Breast epithelium (tissue), 4 donors: ENCODE measurements at regions of chr9 and their contacts with region 1.

Region 1: GRCh38 chr9:81103597-81104471 is 585.5 kb downstream of the TLE1 start:
- DNase-seq: no peak
- H3K4me3 ChIP-seq: no peak overlapping the region
- H3K27ac ChIP-seq: no peak overlapping the region
- H3K4me1 ChIP-seq: no peaks in the 10 kb centered on the region
- H3K27me3 ChIP-seq: no peaks in the 10 kb centered on the region
- CTCF ChIP-seq: no peak
- POLR2A ChIP-seq: no peak

Region 2: GRCh38 chr9:79312686-79313421 is 1791.0 kb before region 1 on chr9:
- intact Hi-C with region 1: no loop called
- DNase-seq: no peak
- H3K4me3 ChIP-seq: no peak overlapping the region
- H3K27ac ChIP-seq: no peak overlapping the region
- H3K4me1 ChIP-seq: no peaks in the 10 kb centered on the region
- H3K27me3 ChIP-seq: no peaks in the 10 kb centered on the region
- CTCF ChIP-seq: no peak
- POLR2A ChIP-seq: no peak

Region 3: GRCh38 chr9:79447762-79448161 is 1656.1 kb before region 1 on chr9:
- intact Hi-C with region 1: no loop called
- DNase-seq: no peak
- H3K4me3 ChIP-seq: no peak overlapping the region
- H3K27ac ChIP-seq: no peak overlapping the region
- H3K4me1 ChIP-seq: no peaks in the 10 kb centered on the region
- H3K27me3 ChIP-seq: no peaks in the 10 kb centered on the region
- CTCF ChIP-seq: no peak
- POLR2A ChIP-seq: no peak

Region 4: GRCh38 chr9:79939819-79940218 is 1164.0 kb before region 1 on chr9:
- intact Hi-C with region 1: no loop called
- DNase-seq: no peak
- H3K4me3 ChIP-seq: no peak overlapping the region
- H3K27ac ChIP-seq: no peak overlapping the region
- H3K4me1 ChIP-seq: no peaks in the 10 kb centered on the region
- H3K27me3 ChIP-seq: no peaks in the 10 kb centered on the region
- CTCF ChIP-seq: no peak
- POLR2A ChIP-seq: no peak

Region 5: DNA sequence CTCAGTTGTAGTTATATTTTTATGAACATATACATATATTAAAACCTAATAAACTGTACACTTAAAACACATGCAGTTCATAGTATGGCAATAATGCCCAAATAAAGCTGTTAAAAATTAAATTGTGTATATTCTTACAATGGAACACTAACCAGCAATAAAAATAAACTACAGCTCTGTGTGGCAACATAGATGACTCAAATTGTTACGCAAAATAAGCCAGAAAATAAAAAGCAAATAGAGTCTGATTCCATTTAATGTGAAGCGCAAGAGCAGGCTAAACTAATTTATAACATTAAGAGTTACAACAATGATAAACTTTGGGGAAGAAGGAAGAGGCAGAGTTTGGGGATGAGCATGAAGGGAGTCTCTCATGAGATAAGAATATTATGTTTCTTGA is 11.8 kb before region 1 on chr9:
- intact Hi-C with region 1: loop called (anchors 1 kb)
- DNase-seq: no peak
- H3K4me3 ChIP-seq: no peak overlapping the region
- H3K27ac ChIP-seq: no peak overlapping the region
- H3K4me1 ChIP-seq: no peaks in the 10 kb centered on the region
- H3K27me3 ChIP-seq: no peaks in the 10 kb centered on the region
- CTCF ChIP-seq: no peak
- POLR2A ChIP-seq: no peak